ENCODE measurements at regions of chr3 and their contacts with region 1.

Region 1: GRCh38 chr3:48194446-48195071 is 6.3 kb upstream of the CDC25A start:
- DNase-seq: peak; percentile 59 to 81 (median 75)
- H3K4me3 ChIP-seq: no peak overlapping the region
- H3K27ac ChIP-seq: no peak overlapping the region
- H3K4me1 ChIP-seq: peaks cover 2% of the 10 kb centered on the region
- H3K27me3 ChIP-seq: no peaks in the 10 kb centered on the region
- CTCF ChIP-seq: peak; percentile 47 to 77 (median 60)
- EP300 ChIP-seq: no peak
- POLR2A ChIP-seq: no peak

Region 2: DNA sequence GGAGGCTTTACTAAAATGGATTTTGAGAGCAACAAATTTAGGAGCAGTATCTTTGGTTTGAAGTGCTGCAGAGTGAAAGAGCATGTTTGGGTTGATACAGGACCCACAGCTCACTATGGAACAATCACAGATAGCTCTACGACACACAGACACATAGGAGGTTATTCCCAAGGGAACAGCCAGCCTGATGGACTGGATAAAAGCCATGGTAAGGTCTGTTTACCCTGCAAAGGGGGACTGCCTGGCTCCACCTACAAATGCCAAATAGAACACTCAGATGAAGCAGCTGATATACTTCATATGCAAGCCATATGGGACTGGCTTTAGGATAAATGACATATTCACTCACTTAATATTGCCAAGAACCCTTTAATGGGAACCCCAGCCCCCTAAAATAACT is 81.7 kb before region 1 on chr3:
- intact Hi-C with region 1: no loop called
- DNase-seq: no peak
- H3K4me3 ChIP-seq: no peak overlapping the region
- H3K27ac ChIP-seq: no peak overlapping the region
- H3K4me1 ChIP-seq: peaks cover 6% of the 10 kb centered on the region
- H3K27me3 ChIP-seq: no peaks in the 10 kb centered on the region
- CTCF ChIP-seq: no peak
- EP300 ChIP-seq: no peak
- POLR2A ChIP-seq: no peak

Region 3: DNA sequence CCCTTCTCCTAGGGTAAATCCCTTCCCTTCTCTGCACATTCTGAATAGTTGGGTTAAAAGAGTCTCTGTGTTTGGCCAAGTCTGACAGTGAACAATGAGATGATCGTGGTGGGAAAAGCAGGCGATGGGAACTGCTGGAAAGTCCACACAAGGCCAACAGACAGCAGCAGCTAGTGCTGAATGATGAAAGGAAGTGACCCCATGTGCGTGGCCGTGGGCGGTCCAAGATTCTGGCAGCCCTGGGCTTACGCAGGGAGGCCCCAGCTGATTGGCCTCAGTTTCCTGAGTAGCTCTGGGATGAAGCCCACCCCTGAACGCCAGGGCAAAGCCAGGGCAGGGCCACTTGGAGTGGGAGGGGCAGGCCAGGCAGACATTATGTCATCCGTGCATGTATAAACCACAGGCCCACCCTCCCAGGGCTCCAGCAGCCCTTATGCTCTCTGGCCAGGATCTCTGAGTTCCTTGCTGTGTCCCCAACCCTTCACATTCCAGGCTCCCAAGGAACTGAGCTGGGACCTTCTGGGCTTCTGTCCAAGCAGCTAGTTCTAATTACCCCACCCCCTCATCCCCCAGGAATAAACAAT is 64.1 kb before region 1 on chr3:
- intact Hi-C with region 1: no loop called
- DNase-seq: peak; percentile 74 to 84 (median 79)
- H3K4me3 ChIP-seq: no peak overlapping the region
- H3K27ac ChIP-seq: peak overlapping the region in 1 of 2 donors; percentile 76
- H3K4me1 ChIP-seq: peaks cover 9% of the 10 kb centered on the region
- H3K27me3 ChIP-seq: no peaks in the 10 kb centered on the region
- CTCF ChIP-seq: no peak
- EP300 ChIP-seq: no peak
- POLR2A ChIP-seq: no peak

Region 4: DNA sequence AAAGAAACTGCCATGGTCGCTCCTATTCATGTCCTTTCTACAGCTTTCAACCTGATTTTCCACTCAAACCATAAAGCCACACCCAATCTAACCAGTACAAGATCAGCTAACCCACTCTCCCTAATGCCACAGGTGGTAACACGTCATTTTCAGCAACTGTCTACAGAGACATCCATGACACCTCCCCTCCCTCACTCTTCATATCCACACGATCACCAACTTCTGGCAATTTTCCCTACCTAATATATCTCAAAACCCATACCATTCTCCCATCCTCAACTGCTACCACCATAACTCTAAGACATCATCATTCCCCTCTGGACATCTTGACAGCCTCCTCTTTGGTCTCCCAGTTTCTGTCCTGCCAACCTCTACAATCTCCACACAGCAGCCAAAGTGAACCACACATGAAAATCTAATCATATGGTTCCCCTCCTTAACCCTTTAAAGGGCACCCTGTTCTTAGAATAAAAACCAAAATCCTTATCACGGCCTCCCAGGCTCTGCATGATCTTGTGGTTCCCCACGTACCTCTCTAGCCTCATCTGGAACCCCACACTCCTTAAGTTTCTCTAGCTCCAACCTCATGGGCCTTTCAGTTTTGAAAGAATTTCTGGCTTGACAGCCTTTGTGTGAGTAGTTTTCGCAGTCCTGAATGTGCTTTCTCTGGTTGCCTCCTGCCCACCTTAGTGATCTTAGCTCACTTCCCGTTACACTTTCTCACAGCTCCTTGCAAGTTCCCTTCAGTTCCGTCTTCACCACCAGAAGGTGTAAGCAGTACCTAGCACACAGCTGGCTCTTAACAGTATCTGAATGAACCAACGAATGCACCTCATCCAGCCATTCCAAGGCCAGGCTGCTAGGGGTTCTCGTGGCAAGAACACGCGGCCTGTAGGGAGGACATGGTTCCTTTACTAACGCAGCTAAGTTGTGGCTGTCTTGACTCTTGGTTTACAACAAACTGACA is 105.5 kb after region 1 on chr3:
- intact Hi-C with region 1: loop called in 1 of 4 experiments (anchors 10 kb)
- DNase-seq: no peak
- H3K4me3 ChIP-seq: peak overlapping the region; percentile 71
- H3K27ac ChIP-seq: peak overlapping the region in 1 of 2 donors; percentile 93
- H3K4me1 ChIP-seq: peaks cover 9% of the 10 kb centered on the region
- H3K27me3 ChIP-seq: no peaks in the 10 kb centered on the region
- CTCF ChIP-seq: no peak
- EP300 ChIP-seq: no peak
- POLR2A ChIP-seq: no peak

Region 5: DNA sequence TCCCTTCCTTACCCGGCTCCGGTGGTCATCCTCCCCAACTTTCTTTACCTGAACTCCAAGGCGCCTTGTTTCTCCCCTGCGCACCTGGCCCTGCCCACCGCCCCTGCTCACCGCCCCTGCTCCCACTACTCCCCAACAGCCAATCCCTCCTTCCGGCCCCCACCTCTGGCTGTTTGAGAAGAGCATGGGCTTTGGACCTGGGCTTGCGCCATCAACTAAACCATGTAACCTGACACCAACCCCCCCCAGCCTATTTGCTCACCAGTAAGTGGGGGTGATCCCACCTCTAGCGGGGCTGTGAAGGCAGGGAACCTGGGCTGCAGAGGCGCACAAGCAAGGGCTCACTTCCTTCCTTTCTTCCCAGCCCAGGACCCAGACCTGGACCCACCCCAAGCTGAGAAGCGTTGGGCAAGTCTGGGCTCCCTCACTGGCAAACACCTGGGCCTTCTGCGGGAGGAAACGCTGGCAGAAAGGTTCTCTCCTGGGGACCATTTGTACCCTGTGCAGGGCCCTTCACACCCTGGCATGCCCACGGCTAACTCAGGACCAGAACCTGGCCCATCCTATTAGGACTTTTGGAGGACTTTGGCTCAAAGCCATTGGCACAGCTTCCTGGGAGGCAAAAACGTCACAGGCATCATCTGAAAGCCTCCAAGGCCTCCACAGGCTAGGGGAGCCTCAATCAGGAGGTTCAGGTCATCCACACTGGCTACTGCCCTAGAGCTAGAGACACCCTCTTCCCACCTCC is 235.6 kb after region 1 on chr3 and contains the start of gene PLXNB1:
- intact Hi-C with region 1: loop called in 3 of 4 experiments (anchors 5 to 10 kb)
- DNase-seq: peak; percentile 86 to 95 (median 87)
- H3K4me3 ChIP-seq: peak within 1 kb of the TSS; percentile 74
- H3K27ac ChIP-seq: peak within 1 kb of the TSS; percentile 93 to 96
- H3K4me1 ChIP-seq: peaks cover 48% of the 10 kb centered on the region
- H3K27me3 ChIP-seq: no peaks in the 10 kb centered on the region
- CTCF ChIP-seq: no peak
- EP300 ChIP-seq: no peak
- POLR2A ChIP-seq: peak; percentile 43
- total RNA-seq, gene PLXNB1: 70.8 to 166 (median 83.7) TPM

Region 6: DNA sequence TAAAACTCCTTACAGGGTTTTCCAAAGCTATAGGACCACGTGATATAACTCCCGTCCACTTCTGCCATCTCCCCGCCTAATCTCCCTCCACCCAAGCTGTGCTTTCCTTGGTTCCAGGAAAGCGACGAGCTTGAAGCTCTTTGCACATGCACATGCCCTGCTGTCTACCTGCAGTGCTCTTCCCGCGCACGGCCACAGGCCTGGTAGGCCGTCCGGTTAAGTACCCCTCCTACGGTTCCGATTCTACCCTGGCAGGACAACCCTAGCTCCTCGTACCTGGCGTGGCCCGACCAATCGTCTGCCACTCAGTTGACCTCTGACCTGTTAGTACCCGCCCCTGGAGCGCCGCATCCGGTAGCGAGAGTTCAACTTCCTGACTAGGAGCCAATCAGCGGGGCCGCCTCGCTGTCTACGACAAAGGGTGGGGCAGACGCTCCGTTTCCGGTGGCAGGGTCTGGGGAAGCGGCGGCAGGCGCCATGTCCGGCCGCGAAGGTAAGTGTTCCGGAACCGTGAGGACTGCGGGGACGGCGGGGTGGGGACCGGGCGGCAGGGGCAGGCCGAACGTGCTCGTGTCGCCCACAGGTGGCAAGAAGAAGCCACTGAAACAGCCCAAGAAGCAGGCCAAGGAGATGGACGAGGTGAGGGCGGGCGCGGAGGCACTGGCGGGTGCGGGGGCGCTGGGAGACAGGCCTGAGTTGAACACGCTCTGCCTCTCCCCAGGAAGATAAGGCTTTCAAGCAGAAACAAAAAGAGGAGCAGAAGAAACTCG is 245.4 kb after region 1 on chr3 and contains the starts of genes CCDC51 and TMA7:
- intact Hi-C with region 1: loop called in 2 of 4 experiments (anchors 5 to 10 kb)
- DNase-seq: peak; percentile 97 to 99 (median 98)
- H3K4me3 ChIP-seq: peak within 1 kb of the TSS; percentile 79
- H3K27ac ChIP-seq: peak within 1 kb of the TSS; percentile 44 to 78
- H3K4me1 ChIP-seq: no peaks in the 10 kb centered on the region
- H3K27me3 ChIP-seq: no peaks in the 10 kb centered on the region
- CTCF ChIP-seq: peak in 1 of 3 donors; percentile 13
- EP300 ChIP-seq: no peak
- POLR2A ChIP-seq: peak; percentile 98
- total RNA-seq, gene CCDC51: 6.3 to 8.5 (median 7.5) TPM
- total RNA-seq, gene TMA7: 138 to 318 (median 199) TPM

Measured in ovary (tissue), 10 donors.